ENCODE measurements at regions of chr13 and their contacts with region 1.

Region 1: GRCh38 chr13:80363890-80364503 is 23.1 kb upstream of the SPRY2 start:
- DNase-seq: no peak
- ATAC-seq: no peak
- H3K4me3 ChIP-seq: no peak overlapping the region
- H3K27ac ChIP-seq: no peak overlapping the region
- H3K4me1 ChIP-seq: no peaks in the 10 kb centered on the region; a peak in 1 of 4 replicates
- H3K27me3 ChIP-seq: no peaks in the 10 kb centered on the region
- CTCF ChIP-seq: peak; percentile 19 to 69 (median 45); a peak in 4 of 6 replicates
- POLR2A ChIP-seq: no peak
- RAD21 ChIP-seq: peak; percentile 55

Region 2: GRCh38 chr13:79679334-79679733 is 684.7 kb before region 1 on chr13:
- CTCF ChIA-PET with region 1: no interaction called
- POLR2A ChIA-PET with region 1: no interaction called
- RAD21 ChIA-PET with region 1: no interaction called
- intact Hi-C with region 1: loop called (anchors 5 kb)
- DNase-seq: peak; percentile 56
- ATAC-seq: peak; percentile 80
- H3K4me3 ChIP-seq: no peak overlapping the region
- H3K27ac ChIP-seq: no peak overlapping the region
- H3K4me1 ChIP-seq: no peaks in the 10 kb centered on the region
- H3K27me3 ChIP-seq: no peaks in the 10 kb centered on the region
- CTCF ChIP-seq: peak; percentile 40 to 87 (median 76); a peak in 5 of 6 replicates
- POLR2A ChIP-seq: no peak
- RAD21 ChIP-seq: peak; percentile 68; the same call in 1 of the 2 replicates

Region 3: GRCh38 chr13:79775830-79776229 is 588.2 kb before region 1 on chr13:
- CTCF ChIA-PET with region 1: no interaction called
- POLR2A ChIA-PET with region 1: no interaction called
- RAD21 ChIA-PET with region 1: no interaction called
- intact Hi-C with region 1: loop called (anchors 2 kb)
- DNase-seq: peak; percentile 7
- ATAC-seq: peak; percentile 53; the same call in 1 of the 2 replicates
- H3K4me3 ChIP-seq: no peak overlapping the region
- H3K27ac ChIP-seq: no peak overlapping the region
- H3K4me1 ChIP-seq: no peaks in the 10 kb centered on the region
- H3K27me3 ChIP-seq: no peaks in the 10 kb centered on the region
- CTCF ChIP-seq: peak; percentile 22 to 53 (median 46); a peak in 5 of 6 replicates
- POLR2A ChIP-seq: no peak
- RAD21 ChIP-seq: peak; percentile 61

Region 4: GRCh38 chr13:79786176-79786575 is 577.8 kb before region 1 on chr13:
- CTCF ChIA-PET with region 1: no interaction called
- POLR2A ChIA-PET with region 1: no interaction called
- RAD21 ChIA-PET with region 1: no interaction called
- intact Hi-C with region 1: no loop called
- DNase-seq: no peak
- ATAC-seq: no peak
- H3K4me3 ChIP-seq: no peak overlapping the region
- H3K27ac ChIP-seq: no peak overlapping the region
- H3K4me1 ChIP-seq: no peaks in the 10 kb centered on the region
- H3K27me3 ChIP-seq: no peaks in the 10 kb centered on the region
- CTCF ChIP-seq: no peak
- POLR2A ChIP-seq: no peak
- RAD21 ChIP-seq: no peak

Measured in HCT116 (cell line).